Mammary epithelial cell (primary cell): ENCODE measurements at regions of chr20 and their contacts with region 1.

Region 1: GRCh38 chr20:10636326-10636818 is 37.4 kb downstream of the JAG1 start:
- DNase-seq: peak; percentile 31
- H3K4me3 ChIP-seq: no peak overlapping the region
- H3K27ac ChIP-seq: peak overlapping the region; percentile 50
- H3K4me1 ChIP-seq: peaks cover 57% of the 10 kb centered on the region
- H3K27me3 ChIP-seq: no peaks in the 10 kb centered on the region
- CTCF ChIP-seq: peak in 1 of 2 donors; percentile 20

Region 2: DNA sequence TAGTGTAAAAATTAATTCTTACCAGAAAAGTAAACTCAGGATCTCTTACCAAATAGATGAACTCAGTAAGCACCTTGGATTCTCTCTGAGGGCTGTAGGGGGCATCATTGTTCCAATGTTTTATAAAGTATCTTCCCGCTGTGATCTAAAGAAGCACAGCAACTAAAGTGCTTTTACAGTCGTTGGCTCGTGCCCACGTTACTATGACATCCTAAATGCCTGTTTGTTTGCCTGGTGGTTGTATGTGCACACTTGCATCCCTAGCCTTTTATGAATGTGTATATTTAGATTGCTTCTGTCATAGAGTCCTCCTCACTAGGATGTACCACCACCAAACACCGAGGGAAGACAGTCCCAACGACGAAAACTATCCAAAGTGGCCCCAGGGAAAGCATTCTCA is 166.8 kb before region 1 on chr20:
- CTCF ChIA-PET with region 1: no interaction called
- dilution Hi-C with region 1: no loop called
- in situ Hi-C with region 1: loop called in 1 of 2 experiments (anchors 25 kb)
- intact Hi-C with region 1: loop called (anchors 2 kb)
- DNase-seq: peak; percentile 73
- H3K4me3 ChIP-seq: no peak overlapping the region
- H3K27ac ChIP-seq: peak overlapping the region; percentile 37
- H3K4me1 ChIP-seq: peaks cover 20% of the 10 kb centered on the region
- H3K27me3 ChIP-seq: no peaks in the 10 kb centered on the region
- CTCF ChIP-seq: peak; percentile 73 to 75

Region 3: DNA sequence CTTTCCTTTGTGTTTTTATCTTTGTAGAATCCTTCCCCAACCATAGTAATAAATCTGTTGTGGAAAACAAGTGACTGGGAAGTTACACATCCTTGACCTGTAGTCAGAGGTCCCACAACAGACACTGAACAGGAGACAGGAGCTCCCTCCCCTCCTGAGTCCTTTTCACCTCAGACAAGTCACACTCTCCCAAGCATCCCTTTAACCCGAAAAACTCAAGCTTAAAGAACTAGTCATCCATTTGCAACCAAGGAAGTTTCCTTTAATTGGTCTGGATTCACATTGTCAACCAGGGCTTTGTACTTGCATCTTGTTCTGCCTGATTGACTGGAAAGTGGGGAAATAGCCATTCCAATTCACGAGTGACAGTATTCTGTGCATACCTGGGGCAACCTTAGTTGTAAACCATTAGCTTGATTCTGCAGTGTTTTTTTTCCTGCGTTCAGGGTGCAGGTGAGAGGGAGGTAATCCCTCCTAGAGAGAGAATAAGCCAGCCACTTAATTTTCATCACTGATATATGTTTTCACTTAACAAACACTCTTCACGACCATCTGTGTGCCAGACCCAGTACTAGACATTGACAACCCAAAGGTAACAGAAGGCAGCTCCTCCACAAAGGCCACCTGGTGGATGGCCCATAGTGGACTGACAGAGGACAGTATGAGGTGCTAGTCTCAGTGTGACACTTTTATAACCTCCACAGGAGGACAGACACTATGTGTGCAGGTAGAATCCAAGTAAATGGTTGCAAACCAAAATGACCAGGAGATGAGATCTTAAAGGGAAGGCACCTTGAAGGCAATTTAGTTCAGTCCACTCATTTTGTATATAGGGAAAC is 88.9 kb before region 1 on chr20:
- CTCF ChIA-PET with region 1: no interaction called
- dilution Hi-C with region 1: loop called (anchors 5 kb)
- in situ Hi-C with region 1: loop called (anchors 5 to 10 kb)
- intact Hi-C with region 1: no loop called
- DNase-seq: no peak
- H3K4me3 ChIP-seq: no peak overlapping the region
- H3K27ac ChIP-seq: no peak overlapping the region
- H3K4me1 ChIP-seq: peaks cover 8% of the 10 kb centered on the region
- H3K27me3 ChIP-seq: no peaks in the 10 kb centered on the region
- CTCF ChIP-seq: no peak

Region 4: DNA sequence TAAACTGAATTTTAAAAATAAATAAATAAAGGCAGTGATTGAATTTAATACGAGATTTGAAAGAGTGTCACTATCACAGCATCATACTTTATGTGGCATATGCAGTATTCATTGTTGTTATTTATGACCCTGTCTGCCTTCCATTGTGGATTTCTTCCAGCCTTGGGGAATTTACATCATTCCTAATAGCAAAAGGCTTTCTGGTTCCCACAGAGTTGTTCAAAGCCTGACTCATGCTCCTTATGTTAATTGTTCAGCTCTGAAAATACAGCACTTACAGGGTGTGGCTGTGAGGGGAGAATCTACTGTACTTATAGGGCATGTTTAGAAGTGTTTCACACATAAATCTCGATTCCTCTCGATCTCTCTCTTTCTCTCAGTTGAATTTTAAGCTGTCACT is 16.9 kb before region 1 on chr20:
- CTCF ChIA-PET with region 1: no interaction called
- dilution Hi-C with region 1: no loop called
- in situ Hi-C with region 1: no loop called
- intact Hi-C with region 1: loop called (anchors 2 kb)
- DNase-seq: peak; percentile 94
- H3K4me3 ChIP-seq: no peak overlapping the region
- H3K27ac ChIP-seq: peak overlapping the region; percentile 88
- H3K4me1 ChIP-seq: peaks cover 12% of the 10 kb centered on the region
- H3K27me3 ChIP-seq: no peaks in the 10 kb centered on the region
- CTCF ChIP-seq: no peak